ENCODE measurements at regions of chr4 and their contacts with region 1.

Region 1: DNA sequence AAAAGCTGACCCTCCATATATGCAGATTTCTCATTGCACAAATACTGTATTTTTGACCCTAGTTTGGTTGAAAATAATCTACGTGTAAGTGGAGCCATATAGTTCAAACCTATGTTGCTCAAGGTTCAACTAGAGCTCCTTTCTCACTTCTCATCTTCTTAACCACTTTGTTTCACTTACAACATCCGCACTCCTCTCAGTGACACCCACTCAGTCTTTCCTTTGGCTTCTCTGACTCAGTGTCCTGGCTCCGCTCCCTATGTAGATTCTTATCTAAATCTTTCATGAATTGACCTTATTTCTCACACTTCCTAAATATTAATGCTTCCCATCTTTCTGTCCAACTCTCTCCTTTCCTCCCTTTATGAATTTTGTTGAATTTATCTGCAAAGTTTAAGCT is 32.9 kb upstream of the DKK2 start:
- DNase-seq: peak; percentile 90
- H3K4me3 ChIP-seq: no peak overlapping the region
- H3K27ac ChIP-seq: peak overlapping the region; percentile 40
- H3K4me1 ChIP-seq: peaks cover 30% of the 10 kb centered on the region
- H3K27me3 ChIP-seq: no peaks in the 10 kb centered on the region
- CTCF ChIP-seq: no peak
- POLR2A ChIP-seq: no peak

Region 2: DNA sequence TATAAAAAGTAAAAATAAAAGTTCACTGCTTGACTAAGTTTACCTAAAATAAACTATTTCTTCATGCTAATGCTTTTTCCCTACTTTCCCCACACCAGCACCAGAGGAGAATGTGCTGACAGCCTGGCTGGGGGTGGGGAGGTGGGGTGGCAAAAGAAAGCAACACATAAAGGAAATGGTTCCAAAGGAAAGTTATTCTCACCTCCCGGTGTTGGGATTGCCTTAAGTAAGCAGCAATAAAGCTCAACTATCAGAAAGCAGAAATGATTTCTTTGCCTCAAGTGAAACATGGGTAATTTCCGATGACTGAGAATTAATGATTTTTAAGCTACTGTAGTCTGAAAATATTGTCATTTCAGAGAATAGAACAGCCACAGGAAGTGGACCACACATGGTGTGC is 51.6 kb after region 1 on chr4:
- CTCF ChIA-PET with region 1: no interaction called
- POLR2A ChIA-PET with region 1: no interaction called
- dilution Hi-C with region 1: no loop called
- intact Hi-C with region 1: loop called (anchors 5 kb)
- DNase-seq: peak; percentile 70
- H3K4me3 ChIP-seq: no peak overlapping the region
- H3K27ac ChIP-seq: no peak overlapping the region
- H3K4me1 ChIP-seq: peaks cover 35% of the 10 kb centered on the region
- H3K27me3 ChIP-seq: no peaks in the 10 kb centered on the region
- CTCF ChIP-seq: no peak
- POLR2A ChIP-seq: no peak

Region 3: GRCh38 chr4:107213410-107213809 is 144.4 kb after region 1 on chr4:
- CTCF ChIA-PET with region 1: no interaction called
- POLR2A ChIA-PET with region 1: no interaction called
- dilution Hi-C with region 1: no loop called
- intact Hi-C with region 1: no loop called
- DNase-seq: no peak
- H3K4me3 ChIP-seq: no peak overlapping the region
- H3K27ac ChIP-seq: no peak overlapping the region
- H3K4me1 ChIP-seq: no peaks in the 10 kb centered on the region
- H3K27me3 ChIP-seq: peaks cover 0 to 2% of the 10 kb centered on the region in 2 experiments
- CTCF ChIP-seq: no peak
- POLR2A ChIP-seq: no peak

Region 4: GRCh38 chr4:107592519-107592918 is 523.5 kb after region 1 on chr4:
- CTCF ChIA-PET with region 1: no interaction called
- POLR2A ChIA-PET with region 1: no interaction called
- dilution Hi-C with region 1: no loop called
- intact Hi-C with region 1: no loop called
- DNase-seq: no peak
- H3K4me3 ChIP-seq: no peak overlapping the region
- H3K27ac ChIP-seq: no peak overlapping the region
- H3K4me1 ChIP-seq: no peaks in the 10 kb centered on the region
- H3K27me3 ChIP-seq: no peaks in the 10 kb centered on the region
- CTCF ChIP-seq: no peak
- POLR2A ChIP-seq: no peak

Measured in endothelial cell of umbilical vein (primary cell).